HCT116 (cell line): ENCODE measurements at regions of chr1 and their contacts with region 1.

Region 1: GRCh38 chr1:94237291-94238226 is at the start of gene ARHGAP29:
- DNase-seq: peak; percentile 67
- ATAC-seq: peak; percentile 87
- H3K4me3 ChIP-seq: peak within 1 kb of the TSS; percentile 76 to 83
- H3K27ac ChIP-seq: peak within 1 kb of the TSS; percentile 94
- H3K4me1 ChIP-seq: peaks cover 54 to 83% of the 10 kb centered on the region in 2 experiments
- H3K27me3 ChIP-seq: no peaks in the 10 kb centered on the region
- CTCF ChIP-seq: no peak
- POLR2A ChIP-seq: peak; percentile 99
- RAD21 ChIP-seq: peak; percentile 26; the same call in 1 of the 2 replicates
- total RNA-seq, gene ARHGAP29: 128 TPM

Region 2: DNA sequence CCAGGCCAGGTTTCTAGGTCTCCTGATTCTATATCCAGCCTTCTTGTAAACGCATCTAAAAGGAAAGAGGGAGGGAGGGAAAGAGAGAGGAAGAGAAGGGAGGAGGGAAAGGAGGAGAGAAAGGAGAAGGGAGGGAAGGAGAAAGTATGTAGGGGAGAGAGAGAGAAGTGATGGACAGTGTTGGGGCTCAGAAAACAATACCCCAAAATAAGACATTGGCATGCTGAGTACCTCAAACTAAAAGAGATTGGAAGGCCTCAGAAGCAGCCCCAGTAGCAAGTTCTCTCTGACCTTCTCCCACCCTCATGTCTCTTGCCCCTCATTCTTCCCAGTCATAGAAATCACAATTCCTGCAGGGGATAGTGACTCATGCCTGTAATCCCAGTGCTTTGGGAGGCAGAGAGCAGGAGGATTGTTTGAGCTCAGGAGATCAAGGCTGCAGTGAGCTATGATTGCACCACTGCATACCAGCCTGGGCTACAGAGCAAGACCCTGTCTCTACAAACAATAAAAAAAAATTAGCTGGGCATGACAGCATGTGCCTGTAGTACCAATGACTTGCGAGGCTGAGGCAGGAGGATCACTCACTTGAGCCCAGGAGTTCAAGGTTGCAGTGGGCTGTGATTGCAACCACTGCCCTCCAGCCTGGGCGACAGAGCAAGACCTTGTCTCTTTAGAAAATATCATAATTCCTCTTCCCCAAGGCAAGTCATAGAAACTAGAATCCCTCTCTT is 409.8 kb before region 1 on chr1:
- CTCF ChIA-PET with region 1: no interaction called
- POLR2A ChIA-PET with region 1: no interaction called
- RAD21 ChIA-PET with region 1: no interaction called
- intact Hi-C with region 1: no loop called
- DNase-seq: no peak
- ATAC-seq: peak; percentile 63
- H3K4me3 ChIP-seq: no peak overlapping the region
- H3K27ac ChIP-seq: no peak overlapping the region
- H3K4me1 ChIP-seq: peaks cover 0 to 27% of the 10 kb centered on the region in 2 experiments
- H3K27me3 ChIP-seq: no peaks in the 10 kb centered on the region
- CTCF ChIP-seq: no peak
- POLR2A ChIP-seq: no peak
- RAD21 ChIP-seq: no peak

Region 3: DNA sequence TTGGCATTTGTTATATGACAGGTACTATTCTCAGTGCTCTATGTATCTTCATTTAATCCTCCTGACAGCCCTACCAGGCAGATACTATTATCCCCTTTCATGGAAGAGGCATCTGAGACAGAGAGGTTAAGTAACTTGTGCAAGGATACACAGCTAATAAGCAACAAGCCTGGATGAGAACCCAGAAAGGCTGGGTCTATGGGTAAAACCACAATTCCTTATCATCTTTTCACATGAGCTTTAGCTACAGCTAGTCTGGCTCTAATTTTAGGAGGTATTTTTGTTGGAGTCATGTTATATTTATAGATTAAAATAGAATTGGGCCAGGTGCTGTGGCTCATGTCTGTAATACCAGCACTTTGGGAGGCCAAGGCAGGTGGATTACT is 386.2 kb before region 1 on chr1:
- CTCF ChIA-PET with region 1: no interaction called
- POLR2A ChIA-PET with region 1: no interaction called
- RAD21 ChIA-PET with region 1: no interaction called
- intact Hi-C with region 1: no loop called
- DNase-seq: no peak
- ATAC-seq: no peak
- H3K4me3 ChIP-seq: no peak overlapping the region
- H3K27ac ChIP-seq: no peak overlapping the region
- H3K4me1 ChIP-seq: peaks cover 4 to 11% of the 10 kb centered on the region in 2 experiments; a peak in 3 of 4 replicates
- H3K27me3 ChIP-seq: no peaks in the 10 kb centered on the region
- CTCF ChIP-seq: no peak
- POLR2A ChIP-seq: no peak
- RAD21 ChIP-seq: no peak

Region 4: DNA sequence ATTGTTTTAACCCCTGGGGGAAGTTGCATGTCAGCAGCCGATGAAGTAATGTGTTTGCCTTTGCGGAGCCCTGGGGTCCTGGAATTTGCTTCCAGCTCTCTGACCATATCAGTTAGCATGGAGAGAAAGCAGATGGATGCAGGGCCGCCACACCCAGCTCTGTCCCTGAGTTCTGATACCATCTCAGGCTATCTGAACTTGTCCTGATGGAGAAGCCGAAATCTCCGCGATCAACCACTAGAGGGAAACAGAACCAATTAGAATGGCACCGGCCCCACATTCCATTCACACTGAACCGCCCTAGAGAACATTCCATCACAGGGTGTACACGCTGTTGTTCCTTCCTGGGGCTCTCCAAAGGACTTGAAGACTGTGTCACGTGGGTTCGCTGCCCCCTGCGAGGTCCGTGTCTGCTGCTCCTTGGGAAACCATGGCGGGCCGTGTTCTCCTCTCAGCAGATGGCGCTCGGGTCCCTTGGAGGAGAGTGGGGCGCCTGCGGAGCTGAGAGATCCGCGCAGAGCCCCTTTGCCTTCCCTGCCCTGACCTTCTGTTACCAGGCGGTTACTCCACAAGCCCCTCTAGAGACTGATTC is 192.0 kb before region 1 on chr1:
- CTCF ChIA-PET with region 1: interaction called, 3 read pairs
- POLR2A ChIA-PET with region 1: interaction called, 3 read pairs
- RAD21 ChIA-PET with region 1: no interaction called
- intact Hi-C with region 1: loop called (anchors 5 kb)
- DNase-seq: peak; percentile 91
- ATAC-seq: peak; percentile 93
- H3K4me3 ChIP-seq: no peak overlapping the region
- H3K27ac ChIP-seq: peak overlapping the region; percentile 27; the same call in 1 of the 2 replicates
- H3K4me1 ChIP-seq: peaks cover 16 to 20% of the 10 kb centered on the region in 2 experiments; a peak in 3 of 4 replicates
- H3K27me3 ChIP-seq: no peaks in the 10 kb centered on the region
- CTCF ChIP-seq: peak; percentile 71 to 98 (median 83)
- POLR2A ChIP-seq: no peak
- RAD21 ChIP-seq: peak; percentile 86

Region 5: DNA sequence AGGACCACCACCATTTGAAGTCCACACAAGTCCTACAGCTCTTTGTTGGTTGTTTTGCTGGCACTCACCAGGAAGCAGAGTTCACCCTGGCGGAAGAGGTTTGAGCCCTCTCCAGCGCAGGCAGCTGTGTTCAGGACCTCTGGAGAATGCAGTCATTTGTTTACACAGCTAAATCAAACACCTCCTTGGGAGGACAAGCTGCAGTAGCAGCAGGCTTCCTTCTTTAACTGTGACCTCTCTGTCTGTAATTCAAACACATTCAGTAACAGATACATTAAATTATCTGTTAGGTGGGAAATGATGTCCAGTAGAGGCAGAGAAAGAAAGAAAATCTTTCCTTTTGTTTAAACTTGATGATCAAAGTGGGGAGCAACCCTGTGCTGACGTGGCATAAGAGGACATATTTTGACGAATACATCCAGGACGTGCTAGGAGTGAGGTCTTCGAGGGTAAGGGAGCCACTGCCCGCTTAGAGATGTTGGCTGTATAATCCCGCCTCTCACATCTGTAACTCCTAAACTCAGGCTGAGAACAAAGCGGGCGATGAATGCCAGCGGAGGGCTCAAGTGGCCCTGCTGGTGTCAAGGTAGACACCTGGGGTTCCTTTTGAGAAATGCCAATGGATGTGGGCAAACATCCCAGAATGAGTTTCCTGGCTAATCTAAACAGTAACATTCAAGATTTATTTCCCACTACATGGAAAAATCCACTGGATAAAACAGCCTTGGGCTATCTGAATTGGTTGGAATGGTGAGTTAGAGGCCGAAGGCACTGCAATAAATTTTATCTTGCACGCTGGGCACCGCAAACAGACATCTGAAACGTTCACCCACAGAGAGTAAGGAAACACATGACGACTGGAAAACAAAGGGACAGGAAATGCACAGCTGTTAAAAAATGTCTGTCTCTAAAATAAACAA is 168.3 kb before region 1 on chr1:
- CTCF ChIA-PET with region 1: no interaction called
- POLR2A ChIA-PET with region 1: interaction called, 27 read pairs
- RAD21 ChIA-PET with region 1: interaction called in 1 of 2 experiments, 3 read pairs
- intact Hi-C with region 1: no loop called
- DNase-seq: no peak
- ATAC-seq: no peak; the same call in 1 of the 2 replicates
- H3K4me3 ChIP-seq: no peak overlapping the region
- H3K27ac ChIP-seq: peak overlapping the region; percentile 20; the same call in 1 of the 2 replicates
- H3K4me1 ChIP-seq: peaks cover 34 to 43% of the 10 kb centered on the region in 2 experiments
- H3K27me3 ChIP-seq: no peaks in the 10 kb centered on the region
- CTCF ChIP-seq: no peak
- POLR2A ChIP-seq: no peak
- RAD21 ChIP-seq: no peak

Region 6: GRCh38 chr1:94142022-94142421 is 95.5 kb before region 1 on chr1:
- CTCF ChIA-PET with region 1: no interaction called
- POLR2A ChIA-PET with region 1: no interaction called
- RAD21 ChIA-PET with region 1: no interaction called
- intact Hi-C with region 1: no loop called
- DNase-seq: no peak
- ATAC-seq: no peak
- H3K4me3 ChIP-seq: no peak overlapping the region
- H3K27ac ChIP-seq: no peak overlapping the region
- H3K4me1 ChIP-seq: peaks cover 0 to 3% of the 10 kb centered on the region in 2 experiments; a peak in 1 of 4 replicates
- H3K27me3 ChIP-seq: no peaks in the 10 kb centered on the region
- CTCF ChIP-seq: no peak
- POLR2A ChIP-seq: no peak
- RAD21 ChIP-seq: no peak

Region 7: GRCh38 chr1:94284476-94284875 is 46.9 kb after region 1 on chr1:
- CTCF ChIA-PET with region 1: no interaction called
- POLR2A ChIA-PET with region 1: interaction called, 10 read pairs
- RAD21 ChIA-PET with region 1: no interaction called
- intact Hi-C with region 1: no loop called
- DNase-seq: no peak
- ATAC-seq: no peak
- H3K4me3 ChIP-seq: no peak overlapping the region
- H3K27ac ChIP-seq: peak overlapping the region; percentile 69; the same call in 1 of the 2 replicates
- H3K4me1 ChIP-seq: peaks cover 58 to 78% of the 10 kb centered on the region in 2 experiments
- H3K27me3 ChIP-seq: no peaks in the 10 kb centered on the region
- CTCF ChIP-seq: no peak
- POLR2A ChIP-seq: no peak
- RAD21 ChIP-seq: no peak

Region 8: GRCh38 chr1:94316836-94317789 is 79.6 kb after region 1 on chr1:
- CTCF ChIA-PET with region 1: no interaction called
- POLR2A ChIA-PET with region 1: interaction called, 24 read pairs
- RAD21 ChIA-PET with region 1: interaction called in 1 of 2 experiments, 3 read pairs
- intact Hi-C with region 1: no loop called
- DNase-seq: no peak
- ATAC-seq: peak; percentile 70
- H3K4me3 ChIP-seq: no peak overlapping the region
- H3K27ac ChIP-seq: peak overlapping the region; percentile 63
- H3K4me1 ChIP-seq: peaks cover 75 to 88% of the 10 kb centered on the region in 2 experiments
- H3K27me3 ChIP-seq: no peaks in the 10 kb centered on the region
- CTCF ChIP-seq: no peak
- POLR2A ChIP-seq: no peak
- RAD21 ChIP-seq: no peak

Region 9: GRCh38 chr1:94335950-94336349 is 98.4 kb after region 1 on chr1:
- CTCF ChIA-PET with region 1: interaction called, 11 read pairs
- POLR2A ChIA-PET with region 1: interaction called, 23 read pairs
- RAD21 ChIA-PET with region 1: interaction called, 3 read pairs
- intact Hi-C with region 1: no loop called
- DNase-seq: peak; percentile 93
- ATAC-seq: peak; percentile 89
- H3K4me3 ChIP-seq: no peak overlapping the region
- H3K27ac ChIP-seq: no peak overlapping the region
- H3K4me1 ChIP-seq: peaks cover 15 to 35% of the 10 kb centered on the region in 2 experiments
- H3K27me3 ChIP-seq: no peaks in the 10 kb centered on the region
- CTCF ChIP-seq: peak; percentile 67 to 100 (median 98)
- POLR2A ChIP-seq: no peak
- RAD21 ChIP-seq: peak; percentile 100